Naive thymus-derived CD4-positive, alpha-beta T cell (primary cell): ENCODE measurements at regions of chr10 and their contacts with region 1.

Region 1: DNA sequence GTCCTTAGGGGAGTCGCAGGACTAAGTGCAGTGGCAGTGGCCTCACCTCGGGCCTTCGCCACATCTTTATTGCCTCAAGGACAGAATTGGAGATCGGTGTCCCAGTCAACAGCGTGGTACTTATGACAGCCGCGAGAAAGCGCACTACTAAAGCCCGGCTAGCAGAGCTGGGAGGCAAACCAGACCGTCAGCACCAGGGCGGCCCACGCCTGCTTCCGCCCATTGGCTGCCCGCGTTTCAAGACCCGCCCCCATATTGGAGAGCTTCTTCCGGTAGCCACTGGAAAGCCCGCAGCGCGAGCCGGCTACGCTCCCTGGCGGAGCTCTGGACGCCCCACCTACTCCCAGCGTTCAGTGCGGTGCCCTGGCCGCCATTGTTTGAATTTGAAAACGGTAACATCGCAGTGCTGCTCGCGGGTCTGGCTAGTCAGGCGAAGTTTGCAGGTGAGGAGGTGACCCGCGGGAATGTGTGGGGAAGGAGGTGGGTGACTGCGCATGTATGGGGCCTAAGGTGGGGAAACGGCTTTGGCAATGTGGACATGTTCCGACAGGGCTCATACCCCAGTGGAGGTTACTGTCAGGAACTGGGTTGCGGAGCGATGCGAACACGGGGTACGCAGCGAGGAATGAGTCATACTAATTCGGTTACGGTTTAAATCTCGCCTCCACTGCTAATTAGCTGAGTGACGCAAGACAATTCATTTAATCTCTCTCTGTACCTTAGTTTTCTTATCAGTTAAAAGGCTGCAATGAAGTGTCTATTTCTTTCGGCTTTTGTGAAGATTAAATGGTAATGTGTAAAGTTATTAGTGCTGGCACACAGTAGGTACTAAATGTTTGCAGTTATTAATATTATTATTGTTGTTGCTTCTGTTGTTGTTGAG is at the start of gene KIF20B:
- DNase-seq: peak; percentile 84 to 96 (median 94)
- ATAC-seq: peak; percentile 99
- H3K4me3 ChIP-seq: peak within 1 kb of the TSS; percentile 92
- H3K4me3 Mint-ChIP-seq: peak within 1 kb of the TSS; percentile 94 to 100 (median 98)
- H3K27ac ChIP-seq: peak within 1 kb of the TSS; percentile 76
- H3K27ac Mint-ChIP-seq: peak within 1 kb of the TSS; percentile 93 to 99 (median 97)
- H3K4me1 ChIP-seq: peaks cover 8 to 11% of the 10 kb centered on the region in 2 donors
- H3K4me1 Mint-ChIP-seq: peaks cover 22 to 51% (median 41%) of the 10 kb centered on the region in 7 donors
- H3K27me3 ChIP-seq: no peaks in the 10 kb centered on the region
- H3K27me3 Mint-ChIP-seq: no peaks in the 10 kb centered on the region
- total RNA-seq, gene KIF20B: 14.5 to 49.0 (median 19.3) TPM

Region 2: GRCh38 chr10:87817609-87818504 is 1883.6 kb before region 1 on chr10 and contains the start of gene ATAD1:
- CTCF ChIA-PET with region 1: no interaction called
- POLR2A ChIA-PET with region 1: no interaction called
- intact Hi-C with region 1: loop called (anchors 2 to 5 kb)
- DNase-seq: peak; percentile 79 to 93 (median 91)
- ATAC-seq: peak; percentile 92
- H3K4me3 ChIP-seq: peak within 1 kb of the TSS; percentile 75
- H3K4me3 Mint-ChIP-seq: peak within 1 kb of the TSS; percentile 90 to 100 (median 94)
- H3K27ac ChIP-seq: peak within 1 kb of the TSS; percentile 89
- H3K27ac Mint-ChIP-seq: peak within 1 kb of the TSS; percentile 93 to 100 (median 98)
- H3K4me1 ChIP-seq: peaks cover 13 to 33% of the 10 kb centered on the region in 2 donors
- H3K4me1 Mint-ChIP-seq: peaks cover 22 to 56% (median 41%) of the 10 kb centered on the region in 7 donors
- H3K27me3 ChIP-seq: no peaks in the 10 kb centered on the region
- H3K27me3 Mint-ChIP-seq: peaks cover 0 to 2% (median 0%) of the 10 kb centered on the region in 5 donors
- total RNA-seq, gene ATAD1: 33.5 to 53.4 (median 46.1) TPM

Region 3: DNA sequence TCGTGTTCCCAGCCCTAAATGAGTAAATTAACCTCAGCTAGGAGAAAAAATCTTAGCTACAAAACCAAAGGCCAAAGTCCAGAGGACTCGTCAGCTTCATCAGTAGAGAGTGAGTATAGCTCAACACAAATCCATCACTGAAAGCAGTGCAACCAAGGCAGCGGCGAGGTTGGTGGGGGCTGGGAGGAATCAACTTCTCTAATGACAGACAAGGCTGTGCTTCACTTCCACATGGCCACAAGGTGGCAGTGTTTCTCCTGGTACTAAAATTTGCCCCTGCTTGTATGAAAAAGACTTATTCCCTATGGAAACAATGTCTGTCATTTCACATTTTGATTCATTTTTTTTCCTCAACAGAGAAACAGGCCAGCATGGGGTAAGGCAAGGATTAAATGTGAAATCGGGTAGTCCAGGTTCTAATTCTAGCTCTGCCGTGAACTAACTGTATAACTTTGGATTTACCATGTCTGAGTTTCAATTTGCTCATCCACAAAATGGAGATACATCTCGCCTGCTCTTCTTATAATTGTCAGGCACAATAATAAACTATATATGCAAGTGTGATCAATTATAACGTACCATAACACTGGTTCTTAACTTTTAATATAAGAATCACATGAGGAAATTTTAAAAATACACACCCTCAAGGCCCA is 671.6 kb before region 1 on chr10:
- CTCF ChIA-PET with region 1: no interaction called
- POLR2A ChIA-PET with region 1: no interaction called
- intact Hi-C with region 1: loop called in 1 of 2 experiments (anchors 1 kb)
- DNase-seq: peak; percentile 37 to 68 (median 53)
- ATAC-seq: peak; percentile 85
- H3K4me3 ChIP-seq: no peak overlapping the region
- H3K4me3 Mint-ChIP-seq: peak overlapping the region in 1 of 10 donors; percentile 30
- H3K27ac ChIP-seq: no peak overlapping the region
- H3K27ac Mint-ChIP-seq: no peak overlapping the region
- H3K4me1 ChIP-seq: no peaks in the 10 kb centered on the region
- H3K4me1 Mint-ChIP-seq: peaks cover 0 to 31% (median 0%) of the 10 kb centered on the region in 7 donors
- H3K27me3 ChIP-seq: no peaks in the 10 kb centered on the region
- H3K27me3 Mint-ChIP-seq: no peaks in the 10 kb centered on the region

Region 4: DNA sequence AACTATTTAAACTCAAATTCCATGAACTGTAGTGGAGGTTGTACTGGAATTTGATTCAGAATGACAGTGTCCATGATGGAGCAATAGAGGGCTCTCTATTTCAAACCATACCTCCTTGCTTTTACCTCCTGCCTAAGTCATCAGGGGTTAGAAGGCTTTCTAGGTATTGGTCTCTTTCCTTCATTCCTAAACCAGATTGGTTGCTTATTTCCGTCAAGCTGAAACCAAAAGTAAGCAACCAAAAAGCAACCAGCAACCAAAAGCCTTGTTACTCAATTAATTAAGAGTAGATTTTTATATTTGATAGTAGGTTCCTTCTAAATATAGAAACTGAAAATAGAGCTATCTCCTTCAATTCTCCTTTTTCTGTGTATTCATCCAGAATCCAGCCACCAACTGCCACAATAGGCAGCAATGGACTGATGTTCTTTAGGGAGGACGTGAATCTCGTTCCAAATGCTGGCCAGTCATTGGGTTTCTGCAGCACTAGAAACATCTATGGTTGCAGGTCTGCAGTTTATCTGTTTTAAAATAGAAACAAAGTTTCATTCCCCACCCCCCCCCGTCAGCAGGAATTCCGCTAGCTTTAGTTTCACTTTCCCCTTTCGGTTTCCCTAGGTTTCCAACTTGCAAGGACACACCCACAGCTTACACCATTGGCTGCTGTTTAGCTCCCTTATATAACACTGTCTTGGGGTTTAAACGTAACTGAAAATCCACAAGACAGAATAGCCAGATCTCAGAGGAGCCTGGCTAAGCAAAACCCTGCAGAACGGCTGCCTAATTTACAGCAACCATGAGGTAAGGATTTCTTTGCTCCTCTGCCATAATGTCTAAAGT is 309.3 kb before region 1 on chr10 and contains the start of gene IFIT1:
- CTCF ChIA-PET with region 1: no interaction called
- POLR2A ChIA-PET with region 1: no interaction called
- intact Hi-C with region 1: loop called in 1 of 2 experiments (anchors 1 kb)
- DNase-seq: peak in 8 of 9 donors; percentile 36 to 84 (median 72)
- ATAC-seq: peak; percentile 96
- H3K4me3 ChIP-seq: peak within 1 kb of the TSS; percentile 82
- H3K4me3 Mint-ChIP-seq: peak within 1 kb of the TSS; percentile 85 to 96 (median 90)
- H3K27ac ChIP-seq: peak within 1 kb of the TSS; percentile 72
- H3K27ac Mint-ChIP-seq: peak within 1 kb of the TSS; percentile 87 to 97 (median 93)
- H3K4me1 ChIP-seq: peaks cover 14 to 19% of the 10 kb centered on the region in 2 donors
- H3K4me1 Mint-ChIP-seq: peaks cover 14 to 53% (median 45%) of the 10 kb centered on the region in 7 donors
- H3K27me3 ChIP-seq: no peaks in the 10 kb centered on the region
- H3K27me3 Mint-ChIP-seq: peaks cover 0 to 6% (median 0%) of the 10 kb centered on the region in 5 donors
- total RNA-seq, gene IFIT1: 1.7 to 15.7 (median 6.5) TPM

Region 5: GRCh38 chr10:89643431-89644331 is 57.8 kb before region 1 on chr10:
- CTCF ChIA-PET with region 1: no interaction called
- POLR2A ChIA-PET with region 1: interaction called, 13 read pairs
- intact Hi-C with region 1: loop called (anchors 1 kb)
- DNase-seq: peak; percentile 22 to 78 (median 68)
- ATAC-seq: peak; percentile 94
- H3K4me3 ChIP-seq: peak overlapping the region; percentile 76
- H3K4me3 Mint-ChIP-seq: no peak overlapping the region
- H3K27ac ChIP-seq: peak overlapping the region; percentile 55
- H3K27ac Mint-ChIP-seq: peak overlapping the region in 2 of 9 donors; percentile 4 to 72
- H3K4me1 ChIP-seq: peaks cover 0 to 6% of the 10 kb centered on the region in 2 donors
- H3K4me1 Mint-ChIP-seq: peaks cover 6 to 13% (median 8%) of the 10 kb centered on the region in 7 donors
- H3K27me3 ChIP-seq: no peaks in the 10 kb centered on the region
- H3K27me3 Mint-ChIP-seq: peaks cover 0 to 23% (median 6%) of the 10 kb centered on the region in 5 donors

Region 6: DNA sequence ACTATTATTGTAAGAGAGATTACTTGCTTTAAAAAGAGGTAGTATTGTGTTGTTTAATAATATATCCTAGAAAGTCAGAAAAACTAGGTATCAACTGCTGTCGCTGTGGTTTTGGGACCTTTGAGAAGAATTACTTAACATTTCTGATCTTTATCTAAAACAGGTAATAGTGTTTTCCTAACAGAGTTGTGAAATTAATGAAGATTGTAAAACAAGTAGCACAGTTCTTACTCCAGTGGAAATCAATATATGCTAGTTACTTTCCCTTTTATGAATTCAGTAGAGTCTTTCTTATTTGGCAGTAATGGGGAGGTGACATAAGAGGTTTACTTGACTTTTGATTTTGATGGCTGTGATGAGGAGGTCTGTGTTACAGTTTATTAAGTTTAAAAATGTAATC is 58.1 kb after region 1 on chr10:
- CTCF ChIA-PET with region 1: no interaction called
- POLR2A ChIA-PET with region 1: no interaction called
- intact Hi-C with region 1: no loop called
- DNase-seq: no peak
- ATAC-seq: no peak
- H3K4me3 ChIP-seq: no peak overlapping the region
- H3K4me3 Mint-ChIP-seq: no peak overlapping the region
- H3K27ac ChIP-seq: no peak overlapping the region
- H3K27ac Mint-ChIP-seq: peak overlapping the region in 1 of 9 donors; percentile 4
- H3K4me1 ChIP-seq: no peaks in the 10 kb centered on the region
- H3K4me1 Mint-ChIP-seq: peaks cover 0 to 4% (median 0%) of the 10 kb centered on the region in 7 donors
- H3K27me3 ChIP-seq: no peaks in the 10 kb centered on the region
- H3K27me3 Mint-ChIP-seq: no peaks in the 10 kb centered on the region

Region 7: GRCh38 chr10:90857635-90858460 is 1156.4 kb after region 1 on chr10 and contains the start of gene HTR7:
- CTCF ChIA-PET with region 1: no interaction called
- POLR2A ChIA-PET with region 1: no interaction called
- intact Hi-C with region 1: loop called in 1 of 2 experiments (anchors 5 kb)
- DNase-seq: peak; percentile 47 to 78 (median 69)
- ATAC-seq: peak; percentile 91
- H3K4me3 ChIP-seq: peak within 1 kb of the TSS; percentile 63
- H3K4me3 Mint-ChIP-seq: peak within 1 kb of the TSS; percentile 88 to 95 (median 90)
- H3K27ac ChIP-seq: no peak within 1 kb of the TSS
- H3K27ac Mint-ChIP-seq: peak within 1 kb of the TSS in 3 of 9 donors; percentile 34 to 77 (median 62)
- H3K4me1 ChIP-seq: peaks cover 6 to 11% of the 10 kb centered on the region in 2 donors
- H3K4me1 Mint-ChIP-seq: peaks cover 0 to 16% (median 10%) of the 10 kb centered on the region in 7 donors
- H3K27me3 ChIP-seq: peaks cover 9 to 23% of the 10 kb centered on the region in 2 donors
- H3K27me3 Mint-ChIP-seq: peaks cover 48 to 83% (median 58%) of the 10 kb centered on the region in 5 donors
- total RNA-seq, gene HTR7: 0.11 to 0.32 (median 0.13) TPM in 3 of 5 experiments, not detected in the others

Region 8: GRCh38 chr10:91220194-91220953 is 1518.9 kb after region 1 on chr10 and contains the start of gene PCGF5:
- CTCF ChIA-PET with region 1: no interaction called
- POLR2A ChIA-PET with region 1: no interaction called
- intact Hi-C with region 1: loop called in 1 of 2 experiments (anchors 1 kb)
- DNase-seq: peak; percentile 82 to 98 (median 90)
- ATAC-seq: peak; percentile 98
- H3K4me3 ChIP-seq: peak within 1 kb of the TSS; percentile 68
- H3K4me3 Mint-ChIP-seq: peak within 1 kb of the TSS; percentile 84 to 96 (median 90)
- H3K27ac ChIP-seq: peak within 1 kb of the TSS; percentile 90
- H3K27ac Mint-ChIP-seq: peak within 1 kb of the TSS; percentile 76 to 95 (median 89)
- H3K4me1 ChIP-seq: peaks cover 28 to 34% of the 10 kb centered on the region in 2 donors
- H3K4me1 Mint-ChIP-seq: peaks cover 33 to 69% (median 55%) of the 10 kb centered on the region in 7 donors
- H3K27me3 ChIP-seq: no peaks in the 10 kb centered on the region
- H3K27me3 Mint-ChIP-seq: no peaks in the 10 kb centered on the region
- total RNA-seq, gene PCGF5: 41.2 to 62.3 (median 57.4) TPM